ENCODE measurements at regions of chr18 and their contacts with region 1.

Region 1: DNA sequence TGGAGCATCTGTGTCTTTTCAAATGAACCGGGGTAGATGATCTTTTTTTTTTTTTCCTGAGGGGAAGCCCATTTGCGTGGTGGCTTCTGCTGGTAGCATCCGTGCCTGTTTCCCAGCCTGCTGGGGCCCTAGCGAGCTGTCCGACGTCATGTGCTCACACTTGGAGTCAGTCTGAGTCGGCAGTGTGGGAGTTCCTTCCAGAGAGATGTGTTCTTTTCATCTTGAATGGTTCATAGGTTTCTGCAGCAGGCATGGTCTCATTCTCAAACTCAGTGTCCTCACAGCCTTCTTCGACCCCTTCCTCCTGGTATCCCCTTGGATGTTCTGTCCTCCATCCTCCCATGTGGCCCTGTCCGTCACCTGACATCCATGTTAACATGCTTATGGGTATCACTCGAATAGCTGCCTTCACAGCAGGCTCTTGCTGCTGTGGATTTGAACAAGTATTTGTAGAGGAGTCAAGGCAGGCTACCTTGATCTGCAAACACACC is 51.0 kb downstream of the LDLRAD4 start:
- DNase-seq: peak; percentile 64
- ATAC-seq: no peak

Region 2: GRCh38 chr18:13211534-13211933 is 58.0 kb before region 1 on chr18:
- intact Hi-C with region 1: no loop called
- DNase-seq: no peak
- ATAC-seq: no peak

Region 3: DNA sequence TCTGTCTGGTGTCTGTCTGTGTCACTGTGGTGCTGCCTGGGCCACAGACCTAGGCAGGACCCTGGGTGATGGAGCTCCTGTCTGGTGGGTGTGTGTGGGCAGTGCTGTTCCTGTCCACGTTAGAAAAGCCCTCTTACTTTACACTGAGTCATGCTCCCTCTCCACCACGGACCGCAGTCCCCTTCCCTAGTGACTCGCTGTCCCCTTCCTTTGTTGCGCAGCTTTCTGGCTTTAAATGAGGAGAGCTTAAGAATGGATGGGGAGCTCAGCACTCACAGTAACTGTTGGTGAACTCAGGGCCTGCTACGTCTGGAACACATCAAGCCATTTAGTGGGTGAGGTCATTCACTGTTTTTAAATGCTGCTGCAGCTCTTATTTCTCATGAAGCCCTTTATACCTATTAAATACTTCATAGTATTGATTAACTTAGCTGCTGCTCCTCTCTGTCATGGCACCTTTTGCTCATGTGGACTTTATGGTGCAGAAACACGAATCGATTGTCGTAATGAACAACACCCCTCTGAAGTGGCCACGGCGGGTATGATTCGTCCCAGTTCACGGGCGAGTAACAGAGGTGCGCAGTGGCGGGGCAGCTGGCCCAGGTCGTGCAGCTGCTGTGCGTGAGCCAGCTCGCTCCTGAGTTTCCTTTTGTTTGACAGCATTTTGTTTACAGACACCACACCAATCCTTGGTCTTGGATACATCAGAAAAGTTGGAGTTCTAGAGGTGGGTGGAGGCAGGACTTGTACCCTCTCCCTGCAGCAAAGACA is 49.4 kb after region 1 on chr18:
- intact Hi-C with region 1: no loop called
- DNase-seq: no peak
- ATAC-seq: peak; percentile 62

Region 4: DNA sequence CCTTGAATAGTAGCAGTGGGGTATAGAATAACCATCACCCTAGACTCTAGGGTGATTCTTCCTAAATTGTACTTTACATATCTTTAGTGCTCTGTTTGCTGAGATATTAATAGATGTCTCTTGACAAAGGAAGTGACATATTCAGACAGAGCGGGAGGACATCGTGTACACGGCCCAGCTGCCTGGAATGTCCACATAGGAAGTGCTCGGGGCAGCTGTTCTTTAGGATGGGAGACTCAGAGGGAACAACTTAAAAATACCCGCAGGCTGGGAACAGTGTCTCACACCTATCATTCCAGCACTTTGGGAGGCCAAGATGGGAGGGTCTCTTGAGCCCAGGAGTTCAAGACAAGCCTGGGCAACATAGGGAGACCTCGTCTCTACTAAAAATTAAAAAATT is 250.7 kb after region 1 on chr18:
- intact Hi-C with region 1: loop called (anchors 10 kb)
- DNase-seq: peak; percentile 79
- ATAC-seq: peak; percentile 89

Measured in Right ventricle myocardium superior (tissue), 1 donor.